ENCODE measurements at regions of chr17 and their contacts with region 1.

Region 1: DNA sequence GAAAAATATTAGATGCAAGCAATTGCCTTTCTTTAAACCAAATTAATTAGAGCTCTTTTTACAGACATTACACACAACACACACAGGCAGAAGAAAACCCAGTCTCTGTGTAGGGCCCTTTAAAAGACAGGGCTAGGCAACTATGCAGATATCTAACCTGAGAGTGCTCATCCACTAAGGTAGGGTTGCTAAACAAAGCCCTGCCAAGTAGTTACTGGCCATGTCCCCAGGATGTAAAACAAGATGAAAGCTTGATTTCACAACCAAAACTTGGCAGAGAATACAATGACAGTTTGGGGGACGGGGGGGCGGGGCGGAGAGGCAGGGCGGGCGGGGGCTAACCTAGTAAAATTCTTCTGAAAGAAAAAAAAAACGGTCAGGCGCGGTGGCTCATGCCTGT is 669.0 kb upstream of the CA10 start:
- DNase-seq: peak; percentile 70
- ATAC-seq: peak; percentile 49; the same call in 1 of the 3 replicates
- H3K4me3 ChIP-seq: no peak overlapping the region
- H3K27ac ChIP-seq: peak overlapping the region; percentile 21
- H3K4me1 ChIP-seq: peaks cover 44% of the 10 kb centered on the region
- H3K27me3 ChIP-seq: no peaks in the 10 kb centered on the region
- CTCF ChIP-seq: no peak
- EP300 ChIP-seq: no peak
- POLR2A ChIP-seq: no peak
- RAD21 ChIP-seq: no peak

Region 2: DNA sequence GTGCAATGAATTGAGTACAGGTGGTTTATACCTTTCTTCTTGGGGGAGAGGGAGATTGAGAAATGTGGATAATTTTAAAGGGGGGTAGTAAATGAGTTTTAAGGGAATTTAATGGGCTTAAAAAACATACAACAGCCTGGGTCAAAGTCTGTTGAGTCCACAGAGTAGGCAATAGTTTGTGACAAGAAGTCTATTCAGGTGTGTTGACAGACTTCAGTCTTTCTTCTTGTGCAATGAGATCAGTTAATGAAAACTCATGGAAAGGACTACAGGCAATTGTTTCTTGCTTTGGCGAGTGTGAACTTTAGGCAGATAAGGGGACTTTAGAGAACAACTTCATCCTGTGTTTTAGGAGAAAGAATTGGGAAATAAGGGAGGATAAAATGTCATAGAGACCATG is 161.3 kb before region 1 on chr17:
- CTCF ChIA-PET with region 1: no interaction called
- POLR2A ChIA-PET with region 1: no interaction called
- in situ Hi-C with region 1: no loop called
- intact Hi-C with region 1: loop called (anchors 1 kb)
- DNase-seq: peak; percentile 65
- ATAC-seq: peak; percentile 34; the same call in 1 of the 3 replicates
- H3K4me3 ChIP-seq: no peak overlapping the region
- H3K27ac ChIP-seq: peak overlapping the region; percentile 59
- H3K4me1 ChIP-seq: peaks cover 26% of the 10 kb centered on the region
- H3K27me3 ChIP-seq: no peaks in the 10 kb centered on the region
- CTCF ChIP-seq: no peak
- EP300 ChIP-seq: peak in 1 of 2 experiments; percentile 82; a peak in 1 of 4 replicates
- POLR2A ChIP-seq: no peak
- RAD21 ChIP-seq: no peak

Region 3: GRCh38 chr17:52751051-52751450 is 76.5 kb before region 1 on chr17:
- CTCF ChIA-PET with region 1: no interaction called
- POLR2A ChIA-PET with region 1: no interaction called
- in situ Hi-C with region 1: no loop called
- intact Hi-C with region 1: no loop called
- DNase-seq: no peak
- ATAC-seq: no peak
- H3K4me3 ChIP-seq: no peak overlapping the region
- H3K27ac ChIP-seq: no peak overlapping the region
- H3K4me1 ChIP-seq: no peaks in the 10 kb centered on the region
- H3K27me3 ChIP-seq: no peaks in the 10 kb centered on the region; a peak in 1 of 5 replicates
- CTCF ChIP-seq: no peak
- EP300 ChIP-seq: no peak
- POLR2A ChIP-seq: no peak
- RAD21 ChIP-seq: no peak